T-cell (primary cell): ENCODE measurements at regions of chr5 and their contacts with region 1.

Region 1: DNA sequence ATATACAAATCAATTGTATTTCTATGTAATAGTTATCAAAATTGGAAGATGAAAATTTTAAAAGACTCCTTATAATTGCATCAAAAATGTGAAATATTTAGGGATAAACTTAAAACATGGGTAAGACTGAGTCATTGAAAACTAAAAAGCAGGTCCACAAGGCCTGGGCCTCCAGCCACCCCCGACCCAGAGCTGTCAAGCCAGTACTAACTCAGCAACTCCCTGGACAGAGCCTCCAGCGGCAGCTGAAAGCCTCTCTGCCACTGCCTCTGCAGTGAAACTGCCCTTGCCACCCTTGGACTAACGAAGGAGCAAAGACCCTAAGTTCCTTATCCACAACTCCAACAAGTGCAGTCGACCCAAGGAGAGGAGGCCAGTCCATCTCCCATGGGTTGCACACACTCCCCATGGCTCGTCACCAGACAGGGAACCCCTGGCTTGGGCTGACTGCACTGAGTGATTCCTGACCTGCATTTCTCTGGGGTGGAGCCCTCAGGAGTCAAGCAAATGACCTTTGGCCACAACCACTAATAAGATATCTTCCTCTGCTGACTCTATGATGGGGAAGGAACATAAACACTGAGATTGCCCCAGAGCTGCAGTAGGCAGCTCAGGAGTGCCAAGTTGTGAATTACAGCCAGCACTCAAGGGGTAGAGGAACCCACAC is 20.5 kb downstream of the PTGER4 start:
- DNase-seq: no peak
- ATAC-seq: peak in 1 of 4 experiments; percentile 36
- H3K4me3 ChIP-seq: no peak overlapping the region
- H3K4me3 Mint-ChIP-seq: no peak overlapping the region
- H3K27ac ChIP-seq: no peak overlapping the region
- H3K27ac Mint-ChIP-seq: no peak overlapping the region
- H3K4me1 ChIP-seq: no peaks in the 10 kb centered on the region
- H3K4me1 Mint-ChIP-seq: peaks cover 0 to 12% (median 4%) of the 10 kb centered on the region in 3 donors
- H3K27me3 ChIP-seq: no peaks in the 10 kb centered on the region
- H3K27me3 Mint-ChIP-seq: no peaks in the 10 kb centered on the region

Region 2: GRCh38 chr5:40630126-40630525 is 70.1 kb before region 1 on chr5:
- CTCF ChIA-PET with region 1: no interaction called
- POLR2A ChIA-PET with region 1: no interaction called
- DNase-seq: no peak
- ATAC-seq: no peak
- H3K4me3 ChIP-seq: no peak overlapping the region
- H3K4me3 Mint-ChIP-seq: no peak overlapping the region
- H3K27ac ChIP-seq: no peak overlapping the region
- H3K27ac Mint-ChIP-seq: no peak overlapping the region
- H3K4me1 ChIP-seq: peaks cover 0 to 2% of the 10 kb centered on the region in 2 experiments
- H3K4me1 Mint-ChIP-seq: peaks cover 15 to 22% (median 15%) of the 10 kb centered on the region in 3 donors
- H3K27me3 ChIP-seq: peaks cover 0 to 3% of the 10 kb centered on the region in 2 experiments
- H3K27me3 Mint-ChIP-seq: no peaks in the 10 kb centered on the region

Region 3: GRCh38 chr5:41057231-41057630 is 357.0 kb after region 1 on chr5:
- CTCF ChIA-PET with region 1: interaction called in 1 of 2 experiments, 12 read pairs
- POLR2A ChIA-PET with region 1: no interaction called
- DNase-seq: no peak
- ATAC-seq: no peak
- H3K4me3 ChIP-seq: no peak overlapping the region
- H3K4me3 Mint-ChIP-seq: no peak overlapping the region
- H3K27ac ChIP-seq: no peak overlapping the region
- H3K27ac Mint-ChIP-seq: no peak overlapping the region
- H3K4me1 ChIP-seq: no peaks in the 10 kb centered on the region
- H3K4me1 Mint-ChIP-seq: no peaks in the 10 kb centered on the region
- H3K27me3 ChIP-seq: no peaks in the 10 kb centered on the region
- H3K27me3 Mint-ChIP-seq: peaks cover 2 to 4% of the 10 kb centered on the region in 2 donors